Right cardiac atrium (tissue), 5 donors: ENCODE measurements at regions of chr18 and their contacts with region 1.

Region 1: DNA sequence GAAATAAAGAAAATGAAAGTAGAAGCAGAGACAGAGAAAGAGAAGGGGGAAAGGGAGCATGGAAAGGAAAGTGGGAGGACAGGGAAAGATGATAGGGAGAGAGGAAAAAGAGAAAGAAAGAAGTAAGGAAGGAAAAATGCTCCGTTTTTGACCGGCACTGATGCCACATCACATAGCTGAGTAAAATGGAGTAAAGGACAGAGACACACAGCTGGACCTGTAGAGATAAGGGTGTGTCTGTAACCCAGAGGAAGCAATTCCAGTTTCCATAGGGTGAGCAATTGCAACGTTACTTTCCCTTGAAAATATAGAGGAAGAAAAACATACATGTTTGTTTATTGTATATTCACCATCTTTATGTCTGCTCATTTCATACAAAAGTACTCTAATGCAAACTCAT is 1866.9 kb upstream of the PIK3C3 start:
- DNase-seq: no peak
- ATAC-seq: no peak
- H3K4me3 ChIP-seq: peak overlapping the region; percentile 44
- H3K27ac ChIP-seq: no peak overlapping the region
- H3K4me1 ChIP-seq: no peaks in the 10 kb centered on the region
- H3K27me3 ChIP-seq: no peaks in the 10 kb centered on the region

Region 2: DNA sequence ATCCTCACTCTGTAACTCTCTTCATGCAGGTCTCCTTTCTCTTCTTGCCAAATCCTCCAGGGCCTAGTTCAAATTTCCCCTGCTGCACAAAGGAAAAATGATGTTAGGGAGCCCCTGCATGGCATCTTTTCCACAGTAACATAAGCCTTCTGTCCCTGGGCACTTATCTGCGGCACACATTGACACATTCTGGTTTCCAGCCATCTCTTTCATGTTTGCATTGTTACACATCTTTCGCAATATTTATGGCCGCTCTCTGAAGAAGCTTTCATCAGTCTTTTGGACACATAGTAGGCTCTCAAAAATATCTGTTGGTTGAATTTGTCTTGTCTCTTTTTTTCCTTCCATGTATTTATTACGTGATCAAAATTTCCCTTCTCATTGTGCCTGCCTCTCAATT is 60.8 kb after region 1 on chr18:
- intact Hi-C with region 1: loop called in 1 of 4 experiments (anchors 10 kb)
- DNase-seq: no peak
- ATAC-seq: no peak
- H3K4me3 ChIP-seq: no peak overlapping the region
- H3K27ac ChIP-seq: no peak overlapping the region
- H3K4me1 ChIP-seq: no peaks in the 10 kb centered on the region
- H3K27me3 ChIP-seq: no peaks in the 10 kb centered on the region